AG04449 (cell line): ENCODE measurements at regions of chr15 and their contacts with region 1.

Region 1: GRCh38 chr15:77543159-77543882 is 89.4 kb downstream of the LINGO1 start:
- DNase-seq: peak; percentile 24
- H3K4me3 ChIP-seq: peak overlapping the region; percentile 57
- CTCF ChIP-seq: peak; percentile 86

Region 2: GRCh38 chr15:77024271-77025082 is 518.8 kb before region 1 on chr15:
- CTCF ChIA-PET with region 1: interaction called, 60 read pairs
- POLR2A ChIA-PET with region 1: no interaction called
- DNase-seq: no peak
- H3K4me3 ChIP-seq: no peak overlapping the region
- CTCF ChIP-seq: peak; percentile 91

Region 3: DNA sequence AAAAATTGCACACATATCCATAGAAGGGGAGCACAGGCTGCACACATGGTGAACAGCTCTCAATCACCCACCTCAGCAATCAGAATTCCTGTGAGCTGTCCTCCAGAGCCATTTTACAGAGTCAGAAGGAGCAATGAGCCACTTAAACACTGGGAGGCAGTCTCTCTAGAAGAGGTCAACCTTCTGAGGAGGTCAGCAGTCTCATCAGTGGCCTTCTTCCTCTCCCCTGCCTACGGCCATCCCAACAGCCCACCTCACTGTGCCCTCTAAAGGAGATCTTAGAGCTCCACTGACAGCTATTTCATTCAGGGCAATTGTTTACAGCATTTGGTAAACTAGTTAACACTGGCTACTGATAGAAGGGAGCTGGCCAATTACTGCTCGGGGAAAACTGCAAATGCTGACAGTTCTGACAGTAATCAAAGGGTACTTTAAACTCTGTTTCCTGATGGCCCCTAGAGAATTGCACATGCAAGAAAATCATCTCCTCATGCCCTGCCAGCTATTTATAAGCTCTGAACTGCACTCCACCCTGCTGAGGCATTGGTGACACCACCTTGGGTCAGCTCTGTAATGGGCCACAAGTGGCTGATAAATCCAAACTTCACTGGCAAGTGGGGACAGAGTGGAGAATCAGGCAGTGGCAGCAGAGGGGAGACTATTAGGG is 430.4 kb before region 1 on chr15:
- CTCF ChIA-PET with region 1: interaction called, 170 read pairs
- POLR2A ChIA-PET with region 1: no interaction called
- DNase-seq: no peak
- H3K4me3 ChIP-seq: no peak overlapping the region
- CTCF ChIP-seq: no peak

Region 4: DNA sequence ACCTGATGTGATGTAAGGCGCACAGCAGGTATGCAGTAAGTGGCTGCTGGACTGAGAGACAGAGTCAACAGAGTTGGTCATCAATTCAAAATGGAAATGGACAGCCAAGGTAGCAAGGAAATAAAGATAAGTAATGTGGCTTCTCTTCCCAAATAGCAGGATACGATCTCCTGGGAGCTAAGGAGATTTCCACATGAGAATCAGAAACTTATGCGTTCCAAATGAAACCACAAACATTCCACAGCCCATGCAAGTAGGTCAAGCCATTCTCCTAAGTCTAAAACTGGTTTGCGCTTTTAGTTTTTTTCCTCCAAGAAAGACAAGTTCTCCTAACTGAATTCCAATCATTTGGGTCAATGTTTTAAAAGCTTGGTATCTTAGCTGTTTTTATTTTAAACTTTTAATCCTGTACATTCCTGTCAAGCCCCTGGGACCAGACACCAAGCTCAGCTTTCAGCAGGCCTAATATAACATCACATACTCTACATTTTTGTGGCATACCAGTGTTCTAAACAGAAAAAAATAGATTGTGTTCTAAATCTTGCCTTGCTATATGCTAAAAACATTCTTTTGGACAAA is 398.7 kb before region 1 on chr15:
- CTCF ChIA-PET with region 1: interaction called, 11 read pairs
- POLR2A ChIA-PET with region 1: interaction called, 8 read pairs
- DNase-seq: peak; percentile 98
- H3K4me3 ChIP-seq: no peak overlapping the region
- CTCF ChIP-seq: no peak

Region 5: GRCh38 chr15:77282333-77282732 is 261.0 kb before region 1 on chr15:
- CTCF ChIA-PET with region 1: interaction called, 13 read pairs
- POLR2A ChIA-PET with region 1: no interaction called
- DNase-seq: peak; percentile 73
- H3K4me3 ChIP-seq: no peak overlapping the region
- CTCF ChIP-seq: no peak

Region 6: GRCh38 chr15:77496710-77497103 is 46.6 kb before region 1 on chr15:
- CTCF ChIA-PET with region 1: interaction called, 42 read pairs
- POLR2A ChIA-PET with region 1: interaction called, 3 read pairs
- DNase-seq: peak; percentile 95
- H3K4me3 ChIP-seq: peak overlapping the region; percentile 19; the same call in 1 of the 2 replicates
- CTCF ChIP-seq: peak; percentile 93

Region 7: GRCh38 chr15:77554306-77555080 is 11.2 kb after region 1 on chr15:
- CTCF ChIA-PET with region 1: interaction called, 10 read pairs
- POLR2A ChIA-PET with region 1: no interaction called
- DNase-seq: no peak
- H3K4me3 ChIP-seq: no peak overlapping the region
- CTCF ChIP-seq: no peak

Region 8: DNA sequence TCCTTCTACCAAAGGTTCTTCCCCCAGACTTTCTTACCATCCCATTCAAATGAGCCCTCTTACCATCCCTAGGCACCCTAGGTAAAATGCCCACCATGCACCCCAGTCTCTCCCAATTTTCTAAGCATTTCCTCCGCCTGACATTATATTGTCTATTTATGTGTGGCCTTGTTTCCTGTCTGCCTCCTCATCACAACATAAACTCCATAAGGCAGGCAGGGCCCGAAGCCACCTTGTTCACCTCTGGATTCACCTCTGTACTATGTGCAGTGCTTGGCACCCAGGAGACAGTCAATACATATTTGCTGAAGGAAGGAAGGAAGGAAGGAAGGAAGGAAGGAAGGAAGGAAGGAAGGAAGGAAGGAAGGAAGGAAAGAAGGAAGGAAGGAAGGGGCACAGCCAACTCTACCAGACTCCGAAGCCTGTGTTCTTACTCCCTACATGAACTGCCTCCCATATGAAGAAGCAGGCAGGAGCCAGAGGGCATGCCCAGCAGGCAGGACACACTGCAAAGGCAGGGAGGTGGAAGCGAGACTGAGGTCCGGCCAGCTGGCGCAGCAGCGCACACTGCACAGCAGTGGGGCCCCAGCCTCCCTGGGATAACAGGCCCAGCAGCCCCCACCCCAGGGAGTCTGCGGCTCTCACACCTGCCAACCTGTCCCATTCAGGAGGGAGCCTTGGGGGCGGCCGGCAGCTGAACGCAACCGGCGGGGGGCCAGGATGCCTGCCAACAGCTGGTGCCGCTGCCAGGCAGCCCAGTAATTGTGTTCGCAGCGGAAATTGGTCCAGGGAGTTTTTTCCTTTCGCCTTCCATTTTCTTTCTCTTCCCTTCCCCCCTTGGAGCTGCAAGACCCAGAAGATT is 195.4 kb after region 1 on chr15:
- CTCF ChIA-PET with region 1: no interaction called
- POLR2A ChIA-PET with region 1: no interaction called
- DNase-seq: no peak
- H3K4me3 ChIP-seq: no peak overlapping the region
- CTCF ChIP-seq: no peak